Dendritic cell treated with granulocyte-macrophage colony-stimulating factor and Interleukin-4, amounts not matched to agents 40 ng/mL and 50 ng/mL, for 4 days (primary cell): ENCODE measurements at regions of chr19 and their contacts with region 1.

Region 1: GRCh38 chr19:52748336-52748950 is 13.6 kb upstream of the ZNF611 start:
- H3K4me3 Mint-ChIP-seq: no peak overlapping the region
- H3K27ac Mint-ChIP-seq: no peak overlapping the region
- H3K4me1 Mint-ChIP-seq: no peaks in the 10 kb centered on the region
- H3K27me3 Mint-ChIP-seq: no peaks in the 10 kb centered on the region

Region 2: GRCh38 chr19:52248241-52248640 is 500.2 kb before region 1 on chr19:
- intact Hi-C with region 1: loop called (anchors 1 kb)
- H3K4me3 Mint-ChIP-seq: no peak overlapping the region
- H3K27ac Mint-ChIP-seq: no peak overlapping the region
- H3K4me1 Mint-ChIP-seq: no peaks in the 10 kb centered on the region
- H3K27me3 Mint-ChIP-seq: no peaks in the 10 kb centered on the region

Region 3: DNA sequence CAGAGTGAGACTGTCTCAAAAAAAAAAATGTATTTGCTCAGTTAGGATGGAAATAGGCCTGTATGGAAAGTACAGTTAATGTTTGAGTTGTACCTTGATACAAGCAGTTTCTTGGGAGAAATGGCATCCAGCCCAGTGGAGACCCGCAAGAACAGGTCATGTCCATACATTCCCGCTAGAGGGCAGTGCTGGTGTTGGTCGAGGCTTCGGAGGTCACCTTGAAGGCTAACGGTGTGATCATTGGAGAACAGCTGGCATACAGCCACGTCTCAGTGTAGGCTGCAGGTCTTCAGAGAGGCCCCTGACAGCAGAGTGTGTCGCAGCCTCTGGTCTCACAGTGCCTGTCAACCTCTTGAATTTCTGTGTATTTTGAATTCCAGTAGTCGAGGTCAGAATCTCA is 404.9 kb before region 1 on chr19:
- intact Hi-C with region 1: loop called (anchors 5 kb)
- H3K4me3 Mint-ChIP-seq: no peak overlapping the region
- H3K27ac Mint-ChIP-seq: no peak overlapping the region
- H3K4me1 Mint-ChIP-seq: no peaks in the 10 kb centered on the region
- H3K27me3 Mint-ChIP-seq: no peaks in the 10 kb centered on the region